K562 (cell line): ENCODE measurements at regions of chr1 and their contacts with region 1.

Region 1: GRCh38 chr1:228120857-228121489 is 11.9 kb upstream of the MRPL55 start:
- DNase-seq: no peak
- ATAC-seq: peak; percentile 77
- H3K4me3 ChIP-seq: no peak overlapping the region
- H3K27ac ChIP-seq: no peak overlapping the region
- H3K4me1 ChIP-seq: peaks cover 0 to 3% of the 10 kb centered on the region in 2 experiments; a peak in 2 of 5 replicates
- H3K27me3 ChIP-seq: no peaks in the 10 kb centered on the region
- CTCF ChIP-seq: no peak
- EP300 ChIP-seq: no peak
- POLR2A ChIP-seq: no peak
- RAD21 ChIP-seq: no peak

Region 2: DNA sequence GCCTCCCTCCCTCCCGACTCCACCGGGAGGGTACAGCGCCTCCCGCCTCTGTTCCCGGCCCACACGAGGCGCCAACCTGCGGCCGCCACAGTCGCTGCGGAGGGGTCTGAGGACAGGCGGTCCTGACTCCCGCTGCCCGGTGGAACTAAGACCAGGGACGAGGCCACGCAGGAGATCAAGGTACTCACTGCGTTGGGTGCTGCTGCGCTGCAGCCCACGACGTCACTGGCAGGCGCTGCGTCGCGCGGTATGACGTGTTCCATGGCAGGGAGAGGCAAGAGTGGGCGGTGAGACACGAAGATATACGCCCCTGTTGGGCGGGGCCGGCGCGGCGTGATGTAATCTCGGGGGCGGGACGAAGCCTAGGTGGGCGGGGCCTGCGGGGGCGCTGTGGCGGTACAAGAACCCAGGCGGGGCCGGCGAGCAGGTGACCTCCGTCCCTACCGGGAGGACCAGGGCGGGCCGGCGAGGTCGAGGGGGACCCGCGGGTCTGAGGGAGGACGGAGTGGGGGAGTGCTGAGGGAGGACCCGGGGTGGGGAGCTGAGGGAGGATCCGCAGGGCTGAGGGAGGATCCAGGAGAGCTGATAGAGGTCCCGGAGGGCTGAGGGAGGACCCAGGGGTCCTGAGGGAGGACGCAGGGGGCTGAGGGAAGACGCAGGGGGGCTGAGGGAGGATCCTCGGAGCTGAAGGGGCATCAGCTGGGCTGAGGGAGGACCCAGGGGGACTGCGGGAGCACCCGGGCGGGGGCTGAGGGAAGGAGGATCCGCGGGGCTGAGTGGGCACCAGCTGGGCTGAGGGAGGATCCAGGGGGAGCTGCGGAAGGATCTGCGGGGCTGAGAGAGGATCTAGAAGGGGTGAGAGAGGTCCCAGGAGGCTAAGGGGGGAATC is 11.7 kb before region 1 on chr1 and contains the start of gene MRPL55:
- CTCF ChIA-PET with region 1: no interaction called
- POLR2A ChIA-PET with region 1: interaction called, 10 read pairs
- in situ Hi-C with region 1: no loop called
- intact Hi-C with region 1: no loop called
- DNase-seq: peak; percentile 96 to 99 (median 98)
- ATAC-seq: peak; percentile 92
- H3K4me3 ChIP-seq: peak within 1 kb of the TSS; percentile 81
- H3K27ac ChIP-seq: peak within 1 kb of the TSS; percentile 77
- H3K4me1 ChIP-seq: peaks cover 16 to 41% of the 10 kb centered on the region in 2 experiments; a peak in 4 of 5 replicates
- H3K27me3 ChIP-seq: no peaks in the 10 kb centered on the region
- CTCF ChIP-seq: peak in 1 of 3 experiments; percentile 13; a peak in 2 of 6 replicates
- EP300 ChIP-seq: peak; percentile 68; the same call in 1 of the 2 replicates
- POLR2A ChIP-seq: peak; percentile 95
- RAD21 ChIP-seq: no peak
- polyA plus RNA-seq, gene MRPL55: 34.9 to 77.0 TPM

Region 3: GRCh38 chr1:228378090-228378872 is 257.3 kb after region 1 on chr1:
- CTCF ChIA-PET with region 1: no interaction called
- POLR2A ChIA-PET with region 1: no interaction called
- in situ Hi-C with region 1: no loop called
- intact Hi-C with region 1: no loop called
- DNase-seq: peak; percentile 77 to 87 (median 84)
- ATAC-seq: peak; percentile 75
- H3K4me3 ChIP-seq: peak overlapping the region; percentile 31
- H3K27ac ChIP-seq: peak overlapping the region; percentile 30; the same call in 2 of the 3 replicates
- H3K4me1 ChIP-seq: peaks cover 0 to 57% of the 10 kb centered on the region in 2 experiments; a peak in 3 of 5 replicates
- H3K27me3 ChIP-seq: no peaks in the 10 kb centered on the region
- CTCF ChIP-seq: peak; percentile 52 to 65 (median 59)
- EP300 ChIP-seq: no peak
- POLR2A ChIP-seq: no peak
- RAD21 ChIP-seq: peak; percentile 34 to 59; a peak in 3 of 4 replicates